Dendritic cell treated with granulocyte-macrophage colony-stimulating factor and Interleukin-4, amounts not matched to agents 40 ng/mL and 50 ng/mL, for 4 days (primary cell): ENCODE measurements at regions of chr2 and their contacts with region 1.

Region 1: DNA sequence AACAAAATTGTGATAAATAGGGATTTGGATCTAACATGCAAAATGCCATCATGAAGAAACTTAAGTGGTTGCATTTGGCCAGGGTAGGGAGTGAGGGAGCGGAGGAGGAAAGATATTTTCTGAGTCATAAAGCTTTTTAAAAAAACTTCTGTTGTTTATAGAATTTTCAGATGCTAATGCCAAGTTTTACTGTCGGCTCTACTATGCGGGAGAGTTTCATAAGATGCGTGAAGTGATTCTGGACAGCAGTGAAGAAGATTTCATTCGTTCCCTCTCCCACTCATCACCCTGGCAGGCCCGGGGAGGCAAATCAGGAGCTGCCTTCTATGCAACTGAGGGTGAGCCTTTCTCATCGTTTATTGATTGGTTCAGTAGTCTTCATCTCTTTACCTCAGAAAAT is 56.0 kb upstream of the PTH2R start:
- H3K4me3 Mint-ChIP-seq: no peak overlapping the region
- H3K27ac Mint-ChIP-seq: no peak overlapping the region
- H3K4me1 Mint-ChIP-seq: no peaks in the 10 kb centered on the region
- H3K27me3 Mint-ChIP-seq: no peaks in the 10 kb centered on the region

Region 2: DNA sequence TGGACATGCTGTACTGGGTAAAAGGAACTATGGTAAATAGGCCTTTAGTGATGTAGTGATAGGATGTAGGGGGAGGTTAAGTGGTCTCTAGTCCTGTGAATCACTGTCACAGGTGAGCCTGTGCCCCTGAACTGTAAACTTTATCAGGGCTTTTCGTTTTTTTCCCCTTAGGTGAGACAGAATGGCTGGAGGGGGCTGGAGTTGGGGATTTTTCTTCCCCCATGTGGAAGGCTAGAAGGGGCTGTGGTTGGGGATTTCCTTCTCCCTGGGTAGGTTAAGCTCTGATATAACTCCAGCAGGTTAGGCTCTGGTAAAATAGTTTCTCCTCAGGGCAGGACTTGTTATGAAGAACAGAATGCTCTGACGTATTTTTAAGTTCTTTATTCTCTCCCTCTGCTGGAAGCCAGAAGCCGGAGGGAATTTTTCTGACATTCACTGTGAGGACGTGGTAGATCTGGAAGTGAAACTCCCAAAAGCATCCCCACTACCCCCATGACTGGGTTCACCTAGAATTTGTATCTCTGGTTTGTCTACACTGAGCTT is 56.1 kb before region 1 on chr2:
- intact Hi-C with region 1: loop called (anchors 5 kb)
- H3K4me3 Mint-ChIP-seq: no peak overlapping the region
- H3K27ac Mint-ChIP-seq: peak overlapping the region; percentile 69
- H3K4me1 Mint-ChIP-seq: peaks cover 40% of the 10 kb centered on the region
- H3K27me3 Mint-ChIP-seq: no peaks in the 10 kb centered on the region

Region 3: DNA sequence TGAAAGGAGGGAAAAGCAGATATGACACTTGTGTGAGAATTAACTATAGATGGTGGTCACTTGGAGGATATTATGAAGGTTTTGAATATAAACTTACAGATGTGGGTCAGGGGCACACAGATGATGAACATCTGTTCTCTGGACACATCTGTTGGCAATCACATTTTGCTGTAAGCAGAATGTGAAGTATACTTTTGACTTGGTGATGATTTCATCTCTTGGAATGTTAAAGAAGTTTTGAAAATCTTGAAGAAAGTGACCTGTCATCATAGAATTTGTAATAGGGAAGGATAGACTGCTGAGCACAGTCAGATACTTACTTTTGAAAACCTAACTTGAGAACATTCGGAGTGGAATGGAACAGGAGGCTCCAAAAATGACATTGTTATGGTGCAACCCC is 44.3 kb before region 1 on chr2:
- intact Hi-C with region 1: no loop called
- H3K4me3 Mint-ChIP-seq: no peak overlapping the region
- H3K27ac Mint-ChIP-seq: no peak overlapping the region
- H3K4me1 Mint-ChIP-seq: peaks cover 9% of the 10 kb centered on the region
- H3K27me3 Mint-ChIP-seq: no peaks in the 10 kb centered on the region

Region 4: GRCh38 chr2:210028178-210028577 is 1677.6 kb after region 1 on chr2:
- intact Hi-C with region 1: loop called (anchors 10 kb)
- H3K4me3 Mint-ChIP-seq: no peak overlapping the region
- H3K27ac Mint-ChIP-seq: no peak overlapping the region
- H3K4me1 Mint-ChIP-seq: peaks cover 5% of the 10 kb centered on the region
- H3K27me3 Mint-ChIP-seq: no peaks in the 10 kb centered on the region